ENCODE measurements at regions of chr3 and their contacts with region 1.

Region 1: GRCh38 chr3:43753781-43754201 is 63.1 kb downstream of the ABHD5 start:
- DNase-seq: peak; percentile 62
- H3K4me3 ChIP-seq: no peak overlapping the region
- H3K27ac ChIP-seq: peak overlapping the region; percentile 68
- H3K4me1 ChIP-seq: peaks cover 19% of the 10 kb centered on the region
- H3K27me3 ChIP-seq: no peaks in the 10 kb centered on the region
- CTCF ChIP-seq: no peak
- POLR2A ChIP-seq: no peak

Region 2: DNA sequence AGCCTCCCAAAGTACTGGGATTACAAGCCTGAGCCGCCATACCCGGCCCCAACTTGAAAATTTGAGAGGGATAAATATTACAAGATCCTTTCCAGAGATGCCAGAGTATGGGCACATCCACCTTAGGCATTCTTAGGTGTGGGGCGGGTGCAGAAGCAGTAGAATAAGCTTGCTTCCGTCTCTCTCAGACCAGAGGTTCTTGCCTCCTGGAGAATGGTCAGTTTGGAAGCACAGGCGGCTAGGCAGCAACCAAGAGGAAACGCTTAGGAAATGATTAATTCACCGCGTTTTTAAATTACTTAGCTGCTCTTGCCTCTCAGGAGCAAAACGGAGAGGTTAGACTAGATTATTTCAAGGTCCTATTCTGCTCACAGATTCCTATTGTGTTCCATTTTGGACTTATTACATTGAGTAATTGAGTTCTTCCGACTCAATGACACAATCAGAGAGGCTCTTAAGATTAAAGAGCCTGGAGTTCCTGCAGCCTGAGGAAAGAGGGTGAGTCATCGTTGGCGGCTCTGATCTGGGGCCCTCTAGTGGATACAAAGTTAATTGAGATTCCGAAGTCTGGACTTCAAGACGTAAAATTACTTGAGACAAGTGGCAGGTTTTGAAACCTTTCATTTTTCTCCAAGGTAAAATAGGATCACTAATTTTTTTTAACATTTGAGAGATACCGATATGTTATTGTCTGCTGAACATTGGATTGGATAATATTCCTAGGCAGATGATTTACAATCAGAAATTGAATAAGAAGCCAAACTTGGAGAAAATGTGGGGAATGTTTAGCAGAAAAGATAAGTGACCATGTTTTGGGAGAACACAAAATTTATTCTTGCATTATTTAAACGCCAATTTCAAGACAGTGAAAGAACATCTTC is 482.1 kb after region 1 on chr3:
- CTCF ChIA-PET with region 1: no interaction called
- POLR2A ChIA-PET with region 1: no interaction called
- dilution Hi-C with region 1: no loop called
- intact Hi-C with region 1: loop called (anchors 5 kb)
- DNase-seq: peak; percentile 96
- H3K4me3 ChIP-seq: no peak overlapping the region
- H3K27ac ChIP-seq: peak overlapping the region; percentile 57
- H3K4me1 ChIP-seq: peaks cover 12% of the 10 kb centered on the region
- H3K27me3 ChIP-seq: no peaks in the 10 kb centered on the region
- CTCF ChIP-seq: peak; percentile 59 to 86
- POLR2A ChIP-seq: no peak

Measured in endothelial cell of umbilical vein (primary cell).